HAP-1 (cell line): ENCODE measurements at regions of chr22 and their contacts with region 1.

Region 1: GRCh38 chr22:28019881-28020871 is 101.1 kb upstream of the PITPNB start:
- DNase-seq: peak; percentile 37 to 86
- H3K4me3 ChIP-seq: no peak overlapping the region
- H3K4me1 ChIP-seq: no peaks in the 10 kb centered on the region
- H3K27me3 ChIP-seq: no peaks in the 10 kb centered on the region

Region 2: DNA sequence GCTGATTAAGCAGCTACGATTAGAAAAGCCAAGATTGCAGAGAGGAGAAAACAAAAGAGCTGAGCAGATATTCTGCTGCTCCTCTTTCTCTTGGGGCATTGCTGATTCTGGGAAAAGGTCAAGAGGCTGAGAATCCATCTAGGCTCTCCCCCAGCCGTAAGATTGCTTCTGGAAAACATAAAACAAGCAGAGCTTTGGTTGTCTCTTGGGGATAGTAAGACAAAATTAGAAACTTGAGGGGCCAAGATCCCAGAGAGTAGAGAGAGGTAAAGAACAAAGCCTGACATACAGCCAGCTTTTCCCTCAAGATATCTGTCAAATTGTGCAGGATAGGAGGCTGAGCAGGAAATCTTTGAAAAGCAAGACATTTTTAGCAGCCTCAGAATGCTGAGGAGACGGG is 501.3 kb after region 1 on chr22:
- in situ Hi-C with region 1: no loop called
- DNase-seq: no peak
- H3K4me3 ChIP-seq: no peak overlapping the region
- H3K4me1 ChIP-seq: peaks cover 3% of the 10 kb centered on the region; the same call in 1 of the 2 replicates
- H3K27me3 ChIP-seq: no peaks in the 10 kb centered on the region

Region 3: GRCh38 chr22:28589102-28589750 is 569.0 kb after region 1 on chr22:
- in situ Hi-C with region 1: loop called (anchors 5 kb)
- DNase-seq: no peak
- H3K4me3 ChIP-seq: no peak overlapping the region
- H3K4me1 ChIP-seq: no peaks in the 10 kb centered on the region
- H3K27me3 ChIP-seq: no peaks in the 10 kb centered on the region